ENCODE measurements at regions of chr9 and their contacts with region 1.

Region 1: DNA sequence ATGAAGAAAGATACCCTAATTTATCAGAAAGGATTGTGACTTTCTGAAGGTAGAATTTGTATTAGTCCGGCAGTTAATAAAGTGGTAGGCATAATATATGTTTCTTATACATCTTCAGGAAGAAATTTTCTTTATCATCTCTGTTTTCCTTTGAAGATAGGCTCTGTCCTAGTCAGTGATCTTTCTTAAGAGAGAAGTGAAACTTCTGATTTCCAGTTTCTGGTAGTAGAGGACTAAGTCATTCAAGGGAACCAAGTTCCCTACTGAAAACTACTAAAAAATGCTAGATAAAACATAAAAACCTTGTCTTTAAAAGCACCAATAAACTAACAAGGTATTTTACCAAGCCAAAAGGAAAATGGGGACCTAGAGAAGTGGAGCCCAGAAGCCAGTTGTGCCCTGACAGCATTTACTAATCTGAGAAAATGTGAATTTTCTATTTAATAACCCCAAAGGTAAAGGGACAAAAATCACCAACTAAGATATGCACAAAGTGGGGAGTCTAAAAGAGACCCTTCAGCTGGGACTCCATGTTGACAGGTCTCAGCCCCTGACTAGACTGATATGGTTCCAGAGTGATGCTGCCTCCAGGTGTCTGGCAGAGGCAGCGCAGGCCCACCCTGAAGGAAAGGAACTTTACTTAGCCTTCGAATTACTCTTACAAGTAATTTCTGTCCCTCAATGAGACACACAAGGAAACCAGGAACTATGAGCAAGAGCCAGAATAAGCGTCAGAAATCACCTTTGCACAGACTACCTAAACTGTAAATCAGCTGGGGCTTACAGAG is 72.7 kb downstream of the FAM78A start:
- DNase-seq: peak in 2 of 3 donors; percentile 24 to 27
- H3K4me3 ChIP-seq: no peak overlapping the region
- H3K27ac ChIP-seq: no peak overlapping the region
- H3K4me1 ChIP-seq: peaks cover 0 to 4% (median 1%) of the 10 kb centered on the region in 4 experiments
- H3K27me3 ChIP-seq: no peaks in the 10 kb centered on the region

Region 2: DNA sequence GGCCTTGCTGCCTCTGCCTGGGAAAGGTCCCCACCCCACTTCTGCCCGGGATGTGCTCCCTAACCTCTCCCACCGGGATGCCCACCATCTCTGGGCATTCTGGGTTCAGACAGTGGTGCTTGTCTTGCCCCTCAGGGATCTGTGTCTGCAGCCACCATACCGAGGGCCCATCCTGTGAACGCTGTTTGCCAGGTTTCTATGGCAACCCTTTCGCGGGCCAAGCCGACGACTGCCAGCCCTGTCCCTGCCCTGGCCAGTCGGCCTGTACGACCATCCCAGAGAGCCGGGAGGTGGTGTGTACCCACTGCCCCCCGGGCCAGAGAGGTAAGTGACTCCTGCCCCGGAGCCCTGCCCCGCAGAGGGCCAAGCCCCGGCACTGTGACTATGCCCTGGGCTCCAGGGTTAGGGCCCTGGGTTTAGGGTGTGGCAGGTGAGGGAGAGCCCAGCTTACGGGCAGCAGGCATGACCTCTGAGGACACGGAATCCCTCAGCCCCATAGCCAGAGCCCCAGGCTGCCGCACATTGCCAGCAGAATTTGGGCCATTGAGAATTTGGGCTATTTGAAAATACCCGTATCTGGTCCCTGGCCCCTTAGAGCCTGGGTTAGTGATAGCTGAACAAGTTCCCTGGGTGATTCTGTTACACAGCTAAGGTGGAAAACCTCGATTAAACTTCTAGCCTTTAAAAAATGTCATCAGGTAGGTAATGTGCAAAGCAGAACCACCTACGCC is 142.6 kb before region 1 on chr9:
- CTCF ChIA-PET with region 1: no interaction called
- POLR2A ChIA-PET with region 1: no interaction called
- DNase-seq: no peak
- H3K4me3 ChIP-seq: no peak overlapping the region
- H3K27ac ChIP-seq: no peak overlapping the region
- H3K4me1 ChIP-seq: peaks cover 0 to 22% (median 10%) of the 10 kb centered on the region in 4 experiments
- H3K27me3 ChIP-seq: no peaks in the 10 kb centered on the region

Region 3: GRCh38 chr9:131187957-131188356 is 15.7 kb before region 1 on chr9:
- CTCF ChIA-PET with region 1: no interaction called
- POLR2A ChIA-PET with region 1: no interaction called
- DNase-seq: no peak
- H3K4me3 ChIP-seq: no peak overlapping the region
- H3K27ac ChIP-seq: no peak overlapping the region
- H3K4me1 ChIP-seq: no peaks in the 10 kb centered on the region
- H3K27me3 ChIP-seq: no peaks in the 10 kb centered on the region

Region 4: GRCh38 chr9:131214286-131214856 is 10.7 kb after region 1 on chr9:
- CTCF ChIA-PET with region 1: interaction called, 17 read pairs
- POLR2A ChIA-PET with region 1: no interaction called
- DNase-seq: no peak
- H3K4me3 ChIP-seq: peak overlapping the region in 3 of 7 experiments; percentile 23 to 60 (median 47)
- H3K27ac ChIP-seq: peak overlapping the region in 1 of 2 experiments; percentile 57
- H3K4me1 ChIP-seq: peaks cover 4 to 50% (median 20%) of the 10 kb centered on the region in 4 experiments
- H3K27me3 ChIP-seq: no peaks in the 10 kb centered on the region

Region 5: DNA sequence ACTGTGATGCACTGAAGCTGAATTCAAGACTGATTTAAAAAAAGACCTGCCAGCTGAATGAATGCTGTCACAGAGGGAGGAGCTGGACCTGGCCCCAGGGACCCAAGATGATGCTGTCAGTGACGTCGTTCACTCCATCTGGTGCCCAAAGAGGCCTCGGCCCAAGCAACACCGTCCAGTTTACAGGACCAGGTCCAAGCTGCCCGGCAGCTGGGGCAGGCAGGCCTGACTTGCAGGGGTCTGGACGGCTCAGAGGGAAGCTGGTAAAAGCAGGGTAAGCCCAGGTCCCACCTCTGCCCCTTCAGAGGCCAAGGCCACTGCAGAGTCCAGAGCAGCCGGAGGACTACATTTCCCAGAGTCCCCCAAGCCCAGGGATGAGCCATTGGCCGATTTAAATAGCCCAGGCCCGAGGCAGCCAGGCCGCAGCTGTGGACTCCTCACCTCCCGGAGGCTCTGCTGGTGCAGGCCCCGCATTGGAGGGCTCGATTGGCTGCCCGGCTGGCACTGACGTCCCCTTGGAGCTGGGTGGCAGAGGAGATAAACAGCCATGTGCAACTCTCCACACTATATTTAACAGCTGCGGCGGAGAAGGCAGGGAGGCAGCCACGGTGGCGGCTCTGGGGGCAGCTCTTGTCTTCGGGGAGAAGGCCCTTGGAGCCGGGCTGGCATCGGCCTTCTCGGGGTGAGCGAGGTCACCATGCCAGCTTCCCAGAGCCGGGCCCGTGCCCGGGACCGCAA is 85.8 kb after region 1 on chr9 and contains the start of gene PLPP7:
- CTCF ChIA-PET with region 1: no interaction called
- POLR2A ChIA-PET with region 1: no interaction called
- DNase-seq: peak in 1 of 3 donors; percentile 46
- H3K4me3 ChIP-seq: peak within 1 kb of the TSS in 3 of 7 experiments; percentile 24 to 64 (median 36)
- H3K27ac ChIP-seq: peak within 1 kb of the TSS in 1 of 2 experiments; percentile 34
- H3K4me1 ChIP-seq: peaks cover 0 to 17% (median 7%) of the 10 kb centered on the region in 4 experiments
- H3K27me3 ChIP-seq: no peaks in the 10 kb centered on the region

Measured in common myeloid progenitor, CD34-positive (primary cell).